Activated CD4-positive, alpha-beta T cell treated with anti-CD3 and anti-CD28 coated beads, Interleukin-2, amount 10 ng/mL, durations not matched to agents 24 days and 14 days (primary cell): ENCODE measurements at regions of chr15 and their contacts with region 1.

Region 1: DNA sequence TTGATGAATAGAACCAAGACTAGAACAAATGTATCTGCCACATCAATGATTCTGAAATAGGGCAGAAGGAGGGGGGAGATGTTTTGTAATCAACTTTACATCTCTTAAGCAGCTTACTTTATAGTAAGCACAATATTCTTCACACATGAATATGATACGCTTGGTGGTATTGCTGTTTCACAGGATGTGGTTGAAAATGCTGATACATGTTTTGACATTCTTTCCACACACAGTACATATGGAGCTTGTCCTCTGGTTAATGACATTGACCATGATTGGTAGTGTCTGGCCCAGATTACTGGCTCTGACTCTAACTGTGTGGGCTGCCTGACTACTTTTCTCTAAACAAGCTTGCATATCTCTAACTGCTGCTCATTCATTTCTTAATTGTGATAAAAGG is 168.9 kb downstream of the KLHL25 start:
- DNase-seq: peak; percentile 76
- H3K4me3 Mint-ChIP-seq: peak overlapping the region; percentile 62
- H3K27ac Mint-ChIP-seq: peak overlapping the region; percentile 88
- H3K4me1 Mint-ChIP-seq: peaks cover 64% of the 10 kb centered on the region
- H3K27me3 Mint-ChIP-seq: no peaks in the 10 kb centered on the region

Region 2: GRCh38 chr15:85603703-85604102 is 22.2 kb before region 1 on chr15:
- intact Hi-C with region 1: loop called (anchors 2 kb)
- DNase-seq: no peak
- H3K4me3 Mint-ChIP-seq: no peak overlapping the region
- H3K27ac Mint-ChIP-seq: no peak overlapping the region
- H3K4me1 Mint-ChIP-seq: peaks cover 10% of the 10 kb centered on the region
- H3K27me3 Mint-ChIP-seq: no peaks in the 10 kb centered on the region

Region 3: GRCh38 chr15:85646538-85647091 is 20.8 kb after region 1 on chr15:
- intact Hi-C with region 1: loop called (anchors 1 kb)
- DNase-seq: peak; percentile 77
- H3K4me3 Mint-ChIP-seq: peak overlapping the region; percentile 52
- H3K27ac Mint-ChIP-seq: peak overlapping the region; percentile 94
- H3K4me1 Mint-ChIP-seq: peaks cover 34% of the 10 kb centered on the region
- H3K27me3 Mint-ChIP-seq: no peaks in the 10 kb centered on the region

Region 4: DNA sequence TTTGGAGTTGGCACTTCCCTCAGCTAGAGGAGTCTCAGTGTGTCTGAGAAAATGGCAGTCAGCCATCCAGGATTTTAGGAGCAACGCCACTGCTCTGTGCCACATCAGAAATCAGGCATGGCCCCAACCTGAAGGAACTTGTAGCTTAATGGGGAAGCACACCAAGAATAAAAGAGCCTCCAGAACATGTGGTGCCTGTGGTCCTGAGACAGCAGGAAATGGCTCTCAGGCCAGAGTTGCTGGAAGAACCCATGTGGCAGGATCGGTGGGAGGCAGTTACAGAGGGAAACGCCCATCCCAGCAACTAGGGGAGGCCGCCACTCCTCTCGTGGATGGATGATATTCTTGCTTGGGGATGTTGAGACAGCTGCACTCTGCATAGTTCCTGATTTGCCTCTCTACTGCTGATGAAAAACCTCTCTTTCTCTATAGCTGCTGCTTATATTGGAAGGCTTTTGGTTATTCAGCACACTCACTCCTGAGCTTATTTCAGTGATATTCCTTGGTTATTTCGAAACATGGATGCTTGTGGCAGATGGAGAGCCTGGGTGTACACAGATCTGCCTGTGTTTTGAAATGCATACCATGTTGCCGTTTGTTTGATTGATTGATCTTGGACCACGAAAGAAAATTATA is 116.4 kb after region 1 on chr15:
- intact Hi-C with region 1: no loop called
- DNase-seq: no peak
- H3K4me3 Mint-ChIP-seq: no peak overlapping the region
- H3K27ac Mint-ChIP-seq: peak overlapping the region; percentile 20
- H3K4me1 Mint-ChIP-seq: peaks cover 2% of the 10 kb centered on the region
- H3K27me3 Mint-ChIP-seq: no peaks in the 10 kb centered on the region